ENCODE measurements at regions of chr9 and their contacts with region 1.

Region 1: GRCh38 chr9:69056191-69056815 is 20.8 kb downstream of the FXN start:
- DNase-seq: no peak
- ATAC-seq: no peak
- H3K4me3 Mint-ChIP-seq: no peak overlapping the region
- H3K27ac Mint-ChIP-seq: no peak overlapping the region
- H3K4me1 Mint-ChIP-seq: peaks cover 20% of the 10 kb centered on the region
- H3K27me3 Mint-ChIP-seq: no peaks in the 10 kb centered on the region

Region 2: DNA sequence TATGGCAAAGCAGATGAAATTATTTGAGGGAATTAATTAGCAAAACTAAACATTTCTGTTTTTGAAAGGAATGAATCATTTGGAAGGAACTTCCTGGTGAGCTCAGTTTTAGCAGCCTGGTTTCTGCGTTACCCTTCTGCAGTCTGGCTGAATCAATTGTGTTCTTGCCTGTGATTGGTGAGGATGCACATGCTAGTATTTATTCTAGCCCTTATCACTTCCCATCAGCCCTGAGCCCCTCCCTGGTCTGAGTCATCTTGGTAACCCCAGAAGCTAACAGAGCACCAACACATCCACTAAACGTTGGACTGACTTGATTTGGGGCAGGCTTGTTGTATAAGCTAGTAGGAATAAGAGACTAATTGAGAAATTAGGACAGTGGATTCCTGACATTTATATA is 124.4 kb after region 1 on chr9:
- CTCF ChIA-PET with region 1: interaction called, 11 read pairs
- DNase-seq: peak; percentile 86
- ATAC-seq: peak; percentile 99
- H3K4me3 Mint-ChIP-seq: peak overlapping the region; percentile 28
- H3K27ac Mint-ChIP-seq: peak overlapping the region; percentile 81
- H3K4me1 Mint-ChIP-seq: peaks cover 58% of the 10 kb centered on the region
- H3K27me3 Mint-ChIP-seq: no peaks in the 10 kb centered on the region

Region 3: GRCh38 chr9:69186841-69187611 is 130.7 kb after region 1 on chr9:
- CTCF ChIA-PET with region 1: interaction called, 121 read pairs
- DNase-seq: no peak
- ATAC-seq: no peak
- H3K4me3 Mint-ChIP-seq: no peak overlapping the region
- H3K27ac Mint-ChIP-seq: no peak overlapping the region
- H3K4me1 Mint-ChIP-seq: peaks cover 22% of the 10 kb centered on the region
- H3K27me3 Mint-ChIP-seq: no peaks in the 10 kb centered on the region

Measured in activated CD8-positive, alpha-beta memory T cell treated with anti-CD3 and anti-CD28 coated beads, Interleukin-2, amount 10 ng/mL, durations not matched to agents 7 days and 5 days (primary cell).